ENCODE measurements at regions of chr1 and their contacts with region 1.

Region 1: DNA sequence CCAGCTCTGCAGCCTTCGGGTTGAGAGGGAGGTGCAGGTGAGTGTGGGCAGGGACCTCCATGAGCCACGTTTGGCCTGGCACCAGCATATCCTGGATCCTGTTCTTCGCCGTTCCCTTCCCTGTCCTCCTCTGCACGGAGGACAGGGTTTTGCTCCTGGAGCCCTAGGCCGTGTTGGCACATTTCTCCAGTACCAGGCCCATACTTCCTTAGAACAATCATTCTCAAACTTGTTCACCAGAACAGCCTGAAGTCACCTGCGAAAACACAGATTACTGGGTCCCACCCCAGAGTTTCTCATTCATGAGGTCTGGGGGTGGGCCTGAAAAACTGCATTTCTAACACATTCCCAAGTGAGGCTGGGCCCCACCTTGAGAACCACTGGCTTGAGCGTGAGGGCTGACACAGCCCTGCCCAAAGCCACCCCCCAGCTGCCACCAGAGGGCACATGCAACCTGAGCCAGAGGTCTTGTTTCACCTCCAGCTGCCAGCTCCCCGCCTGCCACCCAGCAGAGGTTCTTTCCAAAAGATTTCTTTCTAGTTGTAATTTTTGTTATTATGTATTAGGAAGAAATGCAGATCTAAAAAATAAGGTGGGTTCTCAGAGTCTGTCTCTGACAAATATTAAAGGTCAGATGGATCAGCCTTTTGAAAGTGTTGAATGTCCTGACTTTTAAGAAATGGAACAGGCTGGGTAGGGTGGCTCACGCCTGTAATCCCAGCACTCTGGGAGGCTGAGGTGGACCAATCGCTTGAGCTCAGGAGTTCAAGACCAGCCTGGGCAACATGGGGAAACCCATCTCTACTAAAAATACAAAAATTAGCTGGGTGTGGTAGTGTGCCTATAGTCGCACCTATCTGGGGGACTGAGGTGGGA is 39.6 kb upstream of the LDLRAP1 start:
- DNase-seq: peak; percentile 76
- H3K4me3 Mint-ChIP-seq: no peak overlapping the region
- H3K27ac Mint-ChIP-seq: no peak overlapping the region
- H3K4me1 Mint-ChIP-seq: peaks cover 19% of the 10 kb centered on the region
- H3K27me3 Mint-ChIP-seq: no peaks in the 10 kb centered on the region

Region 2: DNA sequence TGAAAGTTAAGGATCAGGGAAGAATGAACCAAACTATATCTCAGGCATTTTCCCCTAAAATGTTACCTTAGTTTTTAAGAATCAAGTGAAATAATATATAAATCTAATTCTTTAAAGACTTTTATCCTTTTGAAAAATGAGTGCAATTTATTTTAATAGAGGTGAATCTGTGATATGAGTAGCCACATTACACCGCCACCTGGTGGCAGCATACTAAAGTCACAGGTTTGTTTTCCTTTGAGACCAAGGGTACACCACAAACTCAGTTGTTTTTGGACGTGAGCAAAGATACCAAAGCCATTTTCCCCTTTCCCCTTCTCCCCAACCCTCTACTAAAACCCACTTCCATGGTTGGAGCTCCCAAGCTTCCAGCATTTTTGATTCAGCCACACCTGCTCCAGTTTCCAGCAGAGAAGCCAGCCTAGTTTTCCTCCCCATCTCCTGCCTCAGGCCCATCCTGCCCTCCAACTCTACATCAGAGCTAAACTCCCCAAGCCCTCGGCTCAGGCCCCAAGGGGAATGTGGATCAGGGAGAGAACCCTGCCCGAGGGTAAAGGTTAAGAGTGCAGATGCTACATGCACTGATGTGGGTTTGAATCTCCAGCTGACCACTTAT is 16.8 kb after region 1 on chr1:
- CTCF ChIA-PET with region 1: interaction called, 52 read pairs
- POLR2A ChIA-PET with region 1: no interaction called
- intact Hi-C with region 1: no loop called
- DNase-seq: peak; percentile 77
- H3K4me3 Mint-ChIP-seq: no peak overlapping the region
- H3K27ac Mint-ChIP-seq: peak overlapping the region; percentile 47
- H3K4me1 Mint-ChIP-seq: peaks cover 5% of the 10 kb centered on the region
- H3K27me3 Mint-ChIP-seq: no peaks in the 10 kb centered on the region